ENCODE measurements at regions of chr12 and their contacts with region 1.

Region 1: GRCh38 chr12:31406345-31406744 is 80.4 kb upstream of the SINHCAF start:
- DNase-seq: no peak
- ATAC-seq: no peak
- H3K4me3 ChIP-seq: no peak overlapping the region
- H3K27ac ChIP-seq: no peak overlapping the region
- H3K4me1 ChIP-seq: no peaks in the 10 kb centered on the region
- H3K27me3 ChIP-seq: no peaks in the 10 kb centered on the region
- CTCF ChIP-seq: no peak
- EP300 ChIP-seq: no peak
- POLR2A ChIP-seq: no peak
- RAD21 ChIP-seq: no peak

Region 2: GRCh38 chr12:31518680-31519227 is 112.4 kb after region 1 on chr12:
- CTCF ChIA-PET with region 1: no interaction called
- POLR2A ChIA-PET with region 1: no interaction called
- in situ Hi-C with region 1: loop called (anchors 25 kb)
- intact Hi-C with region 1: no loop called
- DNase-seq: peak; percentile 10
- ATAC-seq: no peak
- H3K4me3 ChIP-seq: no peak overlapping the region
- H3K27ac ChIP-seq: peak overlapping the region; percentile 8
- H3K4me1 ChIP-seq: peaks cover 26% of the 10 kb centered on the region
- H3K27me3 ChIP-seq: no peaks in the 10 kb centered on the region
- CTCF ChIP-seq: no peak
- EP300 ChIP-seq: no peak
- POLR2A ChIP-seq: no peak
- RAD21 ChIP-seq: no peak

Region 3: GRCh38 chr12:31629756-31630732 is 223.7 kb after region 1 on chr12:
- CTCF ChIA-PET with region 1: no interaction called
- POLR2A ChIA-PET with region 1: no interaction called
- in situ Hi-C with region 1: loop called (anchors 5 kb)
- intact Hi-C with region 1: no loop called
- DNase-seq: no peak
- ATAC-seq: no peak; the same call in 2 of the 3 replicates
- H3K4me3 ChIP-seq: no peak overlapping the region
- H3K27ac ChIP-seq: no peak overlapping the region
- H3K4me1 ChIP-seq: peaks cover 13% of the 10 kb centered on the region
- H3K27me3 ChIP-seq: no peaks in the 10 kb centered on the region; a peak in 1 of 5 replicates
- CTCF ChIP-seq: no peak
- EP300 ChIP-seq: no peak
- POLR2A ChIP-seq: no peak
- RAD21 ChIP-seq: no peak

Region 4: DNA sequence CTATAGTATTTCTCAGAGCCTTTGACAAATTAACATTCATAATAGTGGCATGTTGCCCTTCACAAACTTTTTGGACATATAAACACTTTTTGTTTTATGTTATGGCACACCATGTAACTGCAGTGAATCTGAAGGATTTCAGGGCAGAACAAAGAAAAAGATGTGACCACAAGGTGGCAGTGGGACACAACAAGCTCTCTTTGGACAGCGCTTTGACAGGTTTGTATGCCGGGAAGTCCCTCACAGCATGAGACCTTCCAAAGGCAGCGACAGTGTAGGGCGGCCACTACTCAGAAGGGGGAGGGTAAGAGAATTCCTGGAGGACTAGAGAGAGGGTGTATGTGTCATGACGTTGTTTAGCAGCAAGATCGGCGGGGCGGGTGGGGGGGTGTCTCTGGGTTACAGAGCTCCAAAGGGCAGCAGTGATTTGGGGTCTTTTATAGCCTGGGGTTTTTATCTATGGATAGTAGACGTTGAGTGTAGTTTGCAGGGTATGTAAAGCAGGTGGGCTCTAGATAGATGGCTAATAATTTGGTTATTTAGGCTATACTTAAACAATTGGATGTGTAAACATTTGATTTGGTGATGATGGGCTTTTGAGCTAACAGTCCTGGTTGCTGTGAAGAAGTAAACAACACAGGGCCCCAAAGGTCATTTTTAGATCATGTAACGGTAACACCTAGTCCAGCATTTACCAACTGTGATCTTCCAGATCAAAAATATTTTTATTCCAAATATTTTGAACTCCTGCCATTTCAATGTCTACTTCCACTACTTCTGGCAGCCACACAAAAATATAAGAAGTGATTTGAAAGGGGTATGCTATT is 276.0 kb after region 1 on chr12:
- CTCF ChIA-PET with region 1: no interaction called
- POLR2A ChIA-PET with region 1: no interaction called
- in situ Hi-C with region 1: no loop called
- intact Hi-C with region 1: no loop called
- DNase-seq: peak; percentile 81
- ATAC-seq: peak; percentile 92
- H3K4me3 ChIP-seq: no peak overlapping the region
- H3K27ac ChIP-seq: no peak overlapping the region
- H3K4me1 ChIP-seq: no peaks in the 10 kb centered on the region
- H3K27me3 ChIP-seq: no peaks in the 10 kb centered on the region
- CTCF ChIP-seq: peak; percentile 90
- EP300 ChIP-seq: no peak
- POLR2A ChIP-seq: no peak
- RAD21 ChIP-seq: peak; percentile 95